ENCODE measurements at regions of chr5 and their contacts with region 1.

Region 1: GRCh38 chr5:188488-189481 is 2.5 kb upstream of the LRRC14B start:
- DNase-seq: peak; percentile 70 to 91 (median 88)
- ATAC-seq: peak; percentile 99
- H3K4me3 ChIP-seq: no peak overlapping the region
- H3K4me3 Mint-ChIP-seq: no peak overlapping the region
- H3K27ac ChIP-seq: no peak overlapping the region
- H3K27ac Mint-ChIP-seq: peak overlapping the region; percentile 60
- H3K4me1 ChIP-seq: peaks cover 7% of the 10 kb centered on the region
- H3K4me1 Mint-ChIP-seq: peaks cover 6% of the 10 kb centered on the region
- H3K27me3 ChIP-seq: no peaks in the 10 kb centered on the region
- H3K27me3 Mint-ChIP-seq: peaks cover 7% of the 10 kb centered on the region
- CTCF ChIP-seq: peak; percentile 86

Region 2: GRCh38 chr5:217860-218456 is 29.2 kb after region 1 on chr5 and contains the starts of genes CCDC127 and SDHA:
- CTCF ChIA-PET with region 1: interaction called, 16 read pairs
- POLR2A ChIA-PET with region 1: interaction called, 14 read pairs
- intact Hi-C with region 1: loop called (anchors 1 kb)
- DNase-seq: peak; percentile 94 to 99 (median 99)
- ATAC-seq: peak; percentile 85
- H3K4me3 ChIP-seq: peak within 1 kb of the TSS; percentile 52 to 83
- H3K4me3 Mint-ChIP-seq: peak within 1 kb of the TSS; percentile 95
- H3K27ac ChIP-seq: peak within 1 kb of the TSS; percentile 70 to 87
- H3K27ac Mint-ChIP-seq: peak within 1 kb of the TSS; percentile 95
- H3K4me1 ChIP-seq: peaks cover 22% of the 10 kb centered on the region
- H3K4me1 Mint-ChIP-seq: peaks cover 52% of the 10 kb centered on the region
- H3K27me3 ChIP-seq: no peaks in the 10 kb centered on the region
- H3K27me3 Mint-ChIP-seq: no peaks in the 10 kb centered on the region
- CTCF ChIP-seq: peak; percentile 33
- total RNA-seq, gene CCDC127: 1.5 to 2.2 TPM
- total RNA-seq, gene SDHA: 203 to 216 TPM

Region 3: GRCh38 chr5:424301-425110 is 235.7 kb after region 1 on chr5:
- CTCF ChIA-PET with region 1: interaction called, 6 read pairs
- POLR2A ChIA-PET with region 1: no interaction called
- intact Hi-C with region 1: loop called in 1 of 2 experiments (anchors 1 kb)
- DNase-seq: no peak
- ATAC-seq: no peak
- H3K4me3 ChIP-seq: no peak overlapping the region
- H3K4me3 Mint-ChIP-seq: no peak overlapping the region
- H3K27ac ChIP-seq: no peak overlapping the region
- H3K27ac Mint-ChIP-seq: no peak overlapping the region
- H3K4me1 ChIP-seq: no peaks in the 10 kb centered on the region
- H3K4me1 Mint-ChIP-seq: no peaks in the 10 kb centered on the region
- H3K27me3 ChIP-seq: no peaks in the 10 kb centered on the region
- H3K27me3 Mint-ChIP-seq: peaks cover 7% of the 10 kb centered on the region
- CTCF ChIP-seq: no peak

Region 4: DNA sequence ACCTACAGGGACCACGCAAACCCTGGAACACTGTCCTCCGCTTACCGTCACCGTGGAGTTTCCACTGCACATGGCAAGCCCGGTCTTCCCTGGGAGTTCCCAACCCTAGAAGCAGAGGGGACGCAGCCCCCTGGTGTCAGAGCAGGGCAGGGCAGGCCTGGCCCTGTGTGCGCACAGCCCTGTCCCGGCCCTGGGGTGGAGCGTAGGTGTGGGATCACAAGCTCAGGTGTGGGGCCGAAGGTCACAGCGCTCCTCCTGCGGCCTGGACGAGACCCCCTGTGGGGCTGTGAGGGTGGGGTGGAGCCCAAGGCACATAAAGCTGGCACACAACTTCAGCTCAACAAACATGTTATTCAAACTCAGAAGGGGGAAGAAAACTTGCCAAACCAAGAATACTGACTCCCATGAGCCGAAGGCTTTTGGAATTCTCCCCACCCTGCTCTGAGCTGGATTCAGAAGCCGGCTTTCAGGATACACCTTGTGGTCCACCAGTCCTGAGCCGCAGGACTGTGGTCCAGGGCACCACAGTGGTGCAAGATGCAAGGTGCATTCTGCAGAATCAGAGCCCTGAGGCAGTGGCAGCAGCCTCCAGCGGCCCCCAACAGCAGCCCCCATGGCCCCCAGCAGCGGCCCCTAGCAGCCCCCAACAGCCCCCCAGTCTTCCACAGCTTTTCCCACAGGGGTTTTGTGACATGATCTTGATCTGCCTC is 242.4 kb after region 1 on chr5:
- CTCF ChIA-PET with region 1: interaction called, 9 read pairs
- POLR2A ChIA-PET with region 1: no interaction called
- intact Hi-C with region 1: loop called in 1 of 2 experiments (anchors 2 kb)
- DNase-seq: peak in 8 of 9 experiments; percentile 10 to 64 (median 44)
- ATAC-seq: peak; percentile 59
- H3K4me3 ChIP-seq: no peak overlapping the region
- H3K4me3 Mint-ChIP-seq: no peak overlapping the region
- H3K27ac ChIP-seq: no peak overlapping the region
- H3K27ac Mint-ChIP-seq: no peak overlapping the region
- H3K4me1 ChIP-seq: no peaks in the 10 kb centered on the region
- H3K4me1 Mint-ChIP-seq: no peaks in the 10 kb centered on the region
- H3K27me3 ChIP-seq: no peaks in the 10 kb centered on the region
- H3K27me3 Mint-ChIP-seq: peaks cover 8% of the 10 kb centered on the region
- CTCF ChIP-seq: peak; percentile 60